ENCODE measurements at regions of chr11 and their contacts with region 1.

Region 1: DNA sequence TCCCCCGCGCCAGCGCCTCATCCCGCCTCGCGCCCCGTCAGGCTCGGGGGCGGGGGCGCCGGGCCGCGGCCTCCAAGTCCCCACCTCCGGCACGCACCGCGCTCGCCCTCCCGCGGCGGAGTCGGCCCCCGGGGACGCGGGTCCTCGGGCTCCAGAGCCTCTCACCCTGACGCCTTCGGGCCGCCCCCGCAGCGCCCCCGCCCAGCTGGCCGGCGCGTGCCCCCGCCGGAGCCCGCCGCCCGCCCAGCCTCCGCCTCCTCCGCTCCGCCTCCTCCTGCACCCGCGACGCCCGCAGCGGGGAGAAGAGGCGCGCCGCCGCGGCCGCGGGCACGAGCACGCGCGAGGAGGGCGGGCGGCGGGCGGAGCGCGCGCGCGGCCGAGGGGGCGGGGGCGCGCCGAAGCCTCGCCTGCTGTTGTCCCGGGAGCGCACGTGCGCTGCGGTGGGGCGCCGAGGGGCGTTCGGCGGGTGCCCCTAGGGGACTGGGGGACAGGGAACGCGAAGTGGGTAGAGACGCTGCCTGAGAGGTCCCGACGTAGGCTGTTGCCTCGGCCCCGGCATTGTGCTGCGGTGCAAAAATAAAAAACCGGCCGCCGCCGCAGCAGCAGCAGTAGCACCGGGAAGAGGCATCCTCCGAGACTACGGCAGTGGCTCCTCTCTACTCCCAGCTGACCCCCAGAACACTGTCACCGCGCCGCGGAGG is 87.4 kb upstream of the ARHGAP32 start:
- DNase-seq: peak; percentile 67
- ATAC-seq: peak; percentile 71
- H3K4me3 ChIP-seq: peak overlapping the region; percentile 76 to 82 (median 77)
- H3K27ac ChIP-seq: peak overlapping the region; percentile 21
- H3K4me1 ChIP-seq: peaks cover 81% of the 10 kb centered on the region
- H3K27me3 ChIP-seq: no peaks in the 10 kb centered on the region; a peak in 2 of 5 replicates
- CTCF ChIP-seq: peak; percentile 53; the same call in 1 of the 2 replicates
- EP300 ChIP-seq: no peak
- POLR2A ChIP-seq: peak; percentile 44 to 73; a peak in 3 of 4 replicates
- RAD21 ChIP-seq: peak; percentile 63

Region 2: DNA sequence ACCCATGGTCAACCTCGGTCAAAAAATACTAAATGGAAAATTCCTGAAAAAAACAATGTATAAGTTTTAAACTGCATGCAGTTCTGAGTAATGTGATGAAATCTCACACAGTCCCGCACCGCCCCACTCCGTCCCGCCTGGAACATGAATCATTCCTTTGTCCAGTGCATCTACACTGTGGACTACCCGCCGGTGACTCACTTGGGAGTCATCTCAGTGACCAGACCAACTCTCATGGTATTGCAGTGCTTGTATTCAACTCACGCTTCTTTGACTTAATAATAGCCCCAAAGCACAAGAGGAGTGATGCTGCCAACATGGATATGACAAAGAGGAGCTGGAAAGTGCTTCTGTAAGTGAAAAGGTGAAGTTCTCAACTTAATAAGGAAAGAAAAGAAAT is 136.1 kb before region 1 on chr11:
- CTCF ChIA-PET with region 1: no interaction called
- POLR2A ChIA-PET with region 1: no interaction called
- in situ Hi-C with region 1: no loop called
- intact Hi-C with region 1: loop called (anchors 5 kb)
- DNase-seq: peak; percentile 97
- ATAC-seq: peak; percentile 100
- H3K4me3 ChIP-seq: peak overlapping the region in 1 of 3 experiments; percentile 39; a peak in 1 of 6 replicates
- H3K27ac ChIP-seq: peak overlapping the region; percentile 78
- H3K4me1 ChIP-seq: peaks cover 41% of the 10 kb centered on the region
- H3K27me3 ChIP-seq: no peaks in the 10 kb centered on the region
- CTCF ChIP-seq: no peak
- EP300 ChIP-seq: peak in 1 of 2 experiments; percentile 77; a peak in 2 of 4 replicates
- POLR2A ChIP-seq: no peak
- RAD21 ChIP-seq: no peak

Region 3: DNA sequence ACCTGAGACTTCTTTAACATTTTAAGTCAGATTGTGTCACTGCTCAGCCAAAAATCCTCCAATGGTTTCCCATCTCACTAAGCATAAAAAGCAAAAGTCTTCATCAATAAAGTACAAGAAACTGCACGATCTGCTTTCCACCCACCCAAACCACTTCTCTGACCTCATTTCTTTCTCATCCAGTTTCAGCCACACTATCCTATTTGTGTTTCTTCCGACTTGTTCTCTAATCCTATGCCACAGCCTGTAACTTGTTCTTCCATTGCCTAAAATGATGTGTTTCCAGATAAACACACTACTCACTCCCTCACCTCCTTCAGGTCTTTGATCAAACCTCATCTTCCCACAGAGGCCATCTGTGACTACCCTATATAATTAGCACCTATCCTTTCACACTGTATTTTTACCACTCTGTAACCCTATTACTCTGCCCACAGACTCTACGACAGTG is 115.7 kb before region 1 on chr11:
- CTCF ChIA-PET with region 1: no interaction called
- POLR2A ChIA-PET with region 1: no interaction called
- in situ Hi-C with region 1: no loop called
- intact Hi-C with region 1: no loop called
- DNase-seq: no peak
- ATAC-seq: no peak
- H3K4me3 ChIP-seq: no peak overlapping the region
- H3K27ac ChIP-seq: no peak overlapping the region
- H3K4me1 ChIP-seq: no peaks in the 10 kb centered on the region
- H3K27me3 ChIP-seq: no peaks in the 10 kb centered on the region
- CTCF ChIP-seq: no peak
- EP300 ChIP-seq: no peak
- POLR2A ChIP-seq: no peak
- RAD21 ChIP-seq: no peak

Region 4: DNA sequence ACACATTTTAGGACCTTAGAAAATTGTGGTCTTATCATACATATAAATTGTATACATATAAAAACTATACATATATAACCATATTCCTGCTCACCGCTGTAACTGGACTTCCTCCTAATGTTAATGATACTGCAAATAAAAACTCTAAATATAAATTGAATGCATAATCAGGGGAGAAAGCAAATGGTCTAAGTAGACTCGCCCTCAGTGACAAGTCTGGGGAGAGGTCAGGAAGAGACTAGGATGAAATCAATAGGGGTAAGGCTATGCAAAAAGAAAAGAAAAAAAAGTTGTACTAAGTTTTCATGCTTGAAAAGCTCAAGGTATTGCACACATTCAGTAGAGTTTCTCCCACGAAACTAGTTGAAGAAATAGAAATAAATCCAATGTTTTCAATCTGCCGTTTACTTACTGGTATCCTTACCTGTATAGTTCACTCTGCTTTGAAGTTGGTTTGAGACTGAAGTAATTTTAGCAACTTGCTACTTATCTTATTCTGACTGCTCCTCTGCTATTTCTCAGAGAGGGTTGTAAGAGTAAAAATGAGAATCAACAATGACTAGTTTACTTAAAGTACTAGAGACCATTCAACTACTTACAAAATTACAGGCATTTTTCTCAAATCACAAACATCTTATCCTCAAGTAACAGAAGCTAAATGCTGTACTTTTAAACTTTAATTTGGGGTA is 75.2 kb before region 1 on chr11:
- CTCF ChIA-PET with region 1: no interaction called
- POLR2A ChIA-PET with region 1: no interaction called
- in situ Hi-C with region 1: no loop called
- intact Hi-C with region 1: loop called (anchors 5 kb)
- DNase-seq: no peak
- ATAC-seq: no peak
- H3K4me3 ChIP-seq: no peak overlapping the region
- H3K27ac ChIP-seq: no peak overlapping the region
- H3K4me1 ChIP-seq: peaks cover 16% of the 10 kb centered on the region
- H3K27me3 ChIP-seq: no peaks in the 10 kb centered on the region
- CTCF ChIP-seq: no peak
- EP300 ChIP-seq: no peak
- POLR2A ChIP-seq: no peak
- RAD21 ChIP-seq: no peak

Region 5: GRCh38 chr11:129230006-129230405 is 49.5 kb before region 1 on chr11:
- CTCF ChIA-PET with region 1: no interaction called
- POLR2A ChIA-PET with region 1: no interaction called
- in situ Hi-C with region 1: no loop called
- intact Hi-C with region 1: loop called (anchors 5 kb)
- DNase-seq: no peak
- ATAC-seq: no peak
- H3K4me3 ChIP-seq: no peak overlapping the region
- H3K27ac ChIP-seq: no peak overlapping the region
- H3K4me1 ChIP-seq: peaks cover 5% of the 10 kb centered on the region
- H3K27me3 ChIP-seq: no peaks in the 10 kb centered on the region
- CTCF ChIP-seq: peak; percentile 34; the same call in 1 of the 2 replicates
- EP300 ChIP-seq: no peak
- POLR2A ChIP-seq: no peak
- RAD21 ChIP-seq: no peak; the same call in 1 of the 2 replicates

Region 6: GRCh38 chr11:129259931-129260348 is 19.5 kb before region 1 on chr11:
- CTCF ChIA-PET with region 1: no interaction called
- POLR2A ChIA-PET with region 1: interaction called, 7 read pairs
- in situ Hi-C with region 1: no loop called
- intact Hi-C with region 1: loop called (anchors 1 kb)
- DNase-seq: peak; percentile 95
- ATAC-seq: peak; percentile 84
- H3K4me3 ChIP-seq: no peak overlapping the region
- H3K27ac ChIP-seq: peak overlapping the region; percentile 64
- H3K4me1 ChIP-seq: peaks cover 73% of the 10 kb centered on the region
- H3K27me3 ChIP-seq: no peaks in the 10 kb centered on the region
- CTCF ChIP-seq: no peak
- EP300 ChIP-seq: peak in 1 of 2 experiments; percentile 73; a peak in 2 of 4 replicates
- POLR2A ChIP-seq: no peak
- RAD21 ChIP-seq: no peak

Region 7: GRCh38 chr11:129323896-129324512 is 44.5 kb after region 1 on chr11:
- CTCF ChIA-PET with region 1: no interaction called
- POLR2A ChIA-PET with region 1: no interaction called
- in situ Hi-C with region 1: no loop called
- intact Hi-C with region 1: loop called (anchors 2 kb)
- DNase-seq: peak; percentile 37
- ATAC-seq: peak; percentile 58
- H3K4me3 ChIP-seq: peak overlapping the region; percentile 54 to 61 (median 55)
- H3K27ac ChIP-seq: no peak overlapping the region
- H3K4me1 ChIP-seq: peaks cover 65% of the 10 kb centered on the region
- H3K27me3 ChIP-seq: no peaks in the 10 kb centered on the region; a peak in 1 of 5 replicates
- CTCF ChIP-seq: no peak
- EP300 ChIP-seq: no peak
- POLR2A ChIP-seq: no peak
- RAD21 ChIP-seq: no peak

Region 8: DNA sequence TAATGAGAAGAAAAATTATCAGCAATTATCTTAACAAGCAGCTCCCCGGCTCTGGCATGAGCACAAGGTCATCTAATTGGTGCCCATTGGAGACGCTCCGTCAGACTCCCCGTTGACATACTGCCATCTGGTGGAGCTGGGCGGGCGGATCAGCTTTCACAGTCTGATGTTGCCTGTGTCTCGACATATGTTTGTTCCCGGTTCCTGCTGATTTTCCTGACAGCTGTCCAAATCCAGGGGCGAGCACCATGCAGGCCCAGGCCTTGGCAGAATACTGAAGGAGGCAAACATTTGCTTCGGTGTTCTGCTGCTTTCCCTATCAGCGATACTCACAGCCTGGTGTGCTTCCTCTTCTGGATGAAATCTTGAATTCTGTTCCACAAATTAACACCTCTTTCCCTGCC is 52.4 kb after region 1 on chr11:
- CTCF ChIA-PET with region 1: no interaction called
- POLR2A ChIA-PET with region 1: no interaction called
- in situ Hi-C with region 1: no loop called
- intact Hi-C with region 1: loop called (anchors 1 kb)
- DNase-seq: peak; percentile 73
- ATAC-seq: peak; percentile 96
- H3K4me3 ChIP-seq: peak overlapping the region in 1 of 3 experiments; percentile 32; a peak in 2 of 6 replicates
- H3K27ac ChIP-seq: no peak overlapping the region
- H3K4me1 ChIP-seq: peaks cover 14% of the 10 kb centered on the region
- H3K27me3 ChIP-seq: no peaks in the 10 kb centered on the region; a peak in 1 of 5 replicates
- CTCF ChIP-seq: peak; percentile 96
- EP300 ChIP-seq: no peak
- POLR2A ChIP-seq: no peak
- RAD21 ChIP-seq: peak; percentile 95

Region 9: DNA sequence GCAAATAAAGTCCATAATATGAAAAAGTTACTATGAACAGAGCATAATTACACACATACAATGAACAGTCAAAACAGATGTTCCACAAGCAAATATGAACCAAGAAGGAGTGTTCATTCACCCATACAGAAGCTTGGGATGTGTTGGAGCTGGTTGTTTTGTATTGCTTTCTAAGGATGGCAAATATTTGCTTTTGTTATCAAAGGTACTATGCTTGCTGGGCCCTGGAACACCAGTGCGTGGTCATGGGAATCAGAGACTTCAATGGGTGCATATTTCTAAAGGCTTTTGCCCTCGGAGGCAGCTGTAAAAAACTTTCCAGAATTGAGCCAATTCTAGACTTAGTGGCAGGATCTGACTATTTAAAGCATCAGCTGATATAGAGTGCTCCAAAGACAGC is 181.2 kb after region 1 on chr11:
- CTCF ChIA-PET with region 1: no interaction called
- POLR2A ChIA-PET with region 1: no interaction called
- in situ Hi-C with region 1: no loop called
- intact Hi-C with region 1: no loop called
- DNase-seq: peak; percentile 53
- ATAC-seq: peak; percentile 78
- H3K4me3 ChIP-seq: no peak overlapping the region
- H3K27ac ChIP-seq: no peak overlapping the region
- H3K4me1 ChIP-seq: peaks cover 17% of the 10 kb centered on the region
- H3K27me3 ChIP-seq: peaks cover 1 to 24% of the 10 kb centered on the region in 2 experiments; a peak in 4 of 5 replicates
- CTCF ChIP-seq: no peak
- EP300 ChIP-seq: no peak
- POLR2A ChIP-seq: no peak
- RAD21 ChIP-seq: no peak